Activated CD8-positive, alpha-beta T cell treated with anti-CD3 and anti-CD28 coated beads for 36 hours (primary cell): ENCODE measurements at regions of chr16 and their contacts with region 1.

Region 1: DNA sequence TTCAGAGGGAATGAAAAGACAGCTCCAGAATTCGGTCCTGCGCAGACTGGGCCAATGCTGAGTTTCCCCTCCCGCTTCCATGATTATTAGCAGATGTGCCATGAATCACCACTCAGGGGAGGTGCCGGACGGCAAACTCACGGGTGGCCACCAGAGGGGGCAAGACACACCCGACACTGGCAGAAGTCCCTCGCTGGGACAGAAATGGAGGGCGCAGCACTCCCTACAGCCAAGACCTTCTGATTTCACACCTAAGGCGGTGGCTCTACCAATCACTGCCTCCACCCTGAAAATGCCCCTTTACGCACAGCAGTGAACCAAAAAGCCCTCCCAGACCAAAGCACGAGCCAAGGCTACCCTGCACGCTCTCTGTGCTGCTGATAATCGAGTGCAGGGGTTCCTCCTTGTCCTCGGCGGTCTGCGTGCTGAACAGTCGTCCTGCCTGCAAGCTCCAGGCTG is 26.8 kb downstream of the TRAP1 start:
- DNase-seq: peak; percentile 91
- ATAC-seq: peak; percentile 98
- H3K4me3 Mint-ChIP-seq: no peak overlapping the region
- H3K27ac Mint-ChIP-seq: no peak overlapping the region
- H3K4me1 Mint-ChIP-seq: peaks cover 18% of the 10 kb centered on the region
- H3K27me3 Mint-ChIP-seq: no peaks in the 10 kb centered on the region
- CTCF ChIP-seq: peak; percentile 88

Region 2: GRCh38 chr16:3562914-3563480 is 127.5 kb before region 1 on chr16:
- CTCF ChIA-PET with region 1: no interaction called
- POLR2A ChIA-PET with region 1: no interaction called
- intact Hi-C with region 1: no loop called
- DNase-seq: no peak
- ATAC-seq: no peak
- H3K4me3 Mint-ChIP-seq: no peak overlapping the region
- H3K27ac Mint-ChIP-seq: no peak overlapping the region
- H3K4me1 Mint-ChIP-seq: no peaks in the 10 kb centered on the region
- H3K27me3 Mint-ChIP-seq: no peaks in the 10 kb centered on the region
- CTCF ChIP-seq: no peak

Region 3: GRCh38 chr16:3638916-3639644 is 51.4 kb before region 1 on chr16:
- CTCF ChIA-PET with region 1: no interaction called
- POLR2A ChIA-PET with region 1: no interaction called
- intact Hi-C with region 1: no loop called
- DNase-seq: no peak
- ATAC-seq: no peak
- H3K4me3 Mint-ChIP-seq: no peak overlapping the region
- H3K27ac Mint-ChIP-seq: peak overlapping the region; percentile 4
- H3K4me1 Mint-ChIP-seq: peaks cover 27% of the 10 kb centered on the region
- H3K27me3 Mint-ChIP-seq: no peaks in the 10 kb centered on the region
- CTCF ChIP-seq: no peak

Region 4: DNA sequence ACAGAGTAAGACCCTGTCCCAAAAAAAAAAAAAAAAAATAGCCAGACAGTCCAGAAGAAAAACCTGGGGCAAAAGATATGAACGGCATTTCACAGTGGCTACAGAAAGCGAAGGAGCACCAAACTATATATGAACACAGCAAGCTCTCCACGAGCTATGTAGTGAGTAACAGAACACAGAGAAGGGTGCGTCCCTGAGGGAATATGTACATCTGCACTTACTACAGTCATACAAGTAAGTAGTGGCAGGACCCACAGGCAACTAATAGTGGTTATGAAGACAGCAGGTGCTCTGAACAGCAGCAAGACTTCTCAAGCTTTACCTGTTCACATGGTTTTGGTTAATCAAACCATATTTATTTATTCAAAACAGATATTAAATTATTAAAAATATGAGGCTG is 11.0 kb after region 1 on chr16:
- CTCF ChIA-PET with region 1: interaction called, 10 read pairs
- POLR2A ChIA-PET with region 1: interaction called, 4 read pairs
- intact Hi-C with region 1: no loop called
- DNase-seq: no peak
- ATAC-seq: no peak
- H3K4me3 Mint-ChIP-seq: no peak overlapping the region
- H3K27ac Mint-ChIP-seq: no peak overlapping the region
- H3K4me1 Mint-ChIP-seq: peaks cover 14% of the 10 kb centered on the region
- H3K27me3 Mint-ChIP-seq: no peaks in the 10 kb centered on the region
- CTCF ChIP-seq: no peak

Region 5: GRCh38 chr16:3712861-3713372 is 22.4 kb after region 1 on chr16:
- CTCF ChIA-PET with region 1: interaction called, 18 read pairs
- POLR2A ChIA-PET with region 1: interaction called, 4 read pairs
- intact Hi-C with region 1: no loop called
- DNase-seq: no peak
- ATAC-seq: no peak
- H3K4me3 Mint-ChIP-seq: no peak overlapping the region
- H3K27ac Mint-ChIP-seq: no peak overlapping the region
- H3K4me1 Mint-ChIP-seq: peaks cover 41% of the 10 kb centered on the region
- H3K27me3 Mint-ChIP-seq: no peaks in the 10 kb centered on the region
- CTCF ChIP-seq: no peak